ENCODE measurements at regions of chr3 and their contacts with region 1.

Region 1: DNA sequence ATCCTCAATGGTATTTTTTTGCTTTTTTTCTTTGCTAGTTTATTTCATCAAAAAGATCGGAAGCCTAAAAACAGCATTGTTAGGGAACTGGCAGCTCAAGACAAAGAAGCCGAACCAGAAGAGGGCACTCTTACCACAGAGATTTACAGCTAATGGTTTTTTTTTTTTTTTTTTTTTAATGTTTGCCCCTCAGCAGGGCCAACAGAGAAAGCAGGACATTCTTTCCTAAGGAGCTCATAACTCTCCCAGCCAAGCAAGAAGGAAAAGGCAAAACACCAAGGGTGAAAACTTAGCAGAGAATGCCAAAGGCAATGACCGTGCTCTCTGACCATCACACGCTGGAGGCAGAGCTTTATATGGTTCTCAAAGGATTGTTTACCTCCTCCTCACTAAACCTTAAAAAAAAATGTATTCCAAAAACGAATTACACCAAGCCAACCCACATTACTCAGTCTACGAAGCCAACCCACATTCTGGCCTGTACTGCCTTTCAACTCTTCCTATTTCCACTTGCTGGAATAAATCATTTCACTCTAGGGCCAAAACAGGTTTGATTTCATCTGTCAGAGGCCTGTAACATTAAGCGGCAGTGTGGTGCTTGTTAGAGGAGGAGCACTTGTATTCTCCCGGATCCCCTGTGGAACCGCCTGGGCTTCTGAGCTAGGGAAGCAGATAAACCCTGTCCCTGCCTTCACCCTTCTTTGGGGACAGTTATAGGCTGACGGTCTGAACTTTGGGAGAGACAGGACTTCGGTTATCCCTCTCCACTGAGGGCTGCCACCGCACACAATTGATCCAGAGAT is 35.6 kb upstream of the GYG1 start:
- DNase-seq: no peak
- ATAC-seq: peak; percentile 66
- H3K4me3 ChIP-seq: no peak overlapping the region
- H3K27ac ChIP-seq: no peak overlapping the region
- H3K4me1 ChIP-seq: no peaks in the 10 kb centered on the region
- H3K27me3 ChIP-seq: no peaks in the 10 kb centered on the region; a peak in 1 of 4 replicates
- CTCF ChIP-seq: peak; percentile 53 to 59 (median 57)
- EP300 ChIP-seq: no peak
- POLR2A ChIP-seq: no peak
- RAD21 ChIP-seq: peak; percentile 80

Region 2: DNA sequence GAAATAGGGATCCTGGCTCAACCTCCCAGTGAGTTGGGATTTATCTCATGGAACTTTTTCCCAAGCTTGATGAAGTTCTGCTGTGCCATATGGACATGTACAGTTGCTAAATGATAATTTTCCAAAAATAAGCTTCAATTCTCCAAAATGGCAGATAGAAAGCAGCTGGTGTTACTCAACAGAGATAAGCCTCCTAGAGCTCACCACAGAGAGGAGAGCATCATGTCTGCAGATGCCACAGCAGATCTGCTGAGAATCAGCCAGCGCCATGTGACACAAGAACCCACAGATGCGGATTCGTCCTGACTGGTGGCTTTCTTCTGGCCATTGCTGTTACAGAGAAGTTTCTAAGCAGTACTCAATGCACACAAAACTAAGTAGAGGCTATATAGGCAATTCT is 207.5 kb before region 1 on chr3:
- CTCF ChIA-PET with region 1: no interaction called
- POLR2A ChIA-PET with region 1: no interaction called
- RAD21 ChIA-PET with region 1: no interaction called
- SMC1A ChIA-PET with region 1: no interaction called
- in situ Hi-C with region 1: no loop called
- intact Hi-C with region 1: no loop called
- DNase-seq: no peak
- ATAC-seq: no peak
- H3K4me3 ChIP-seq: no peak overlapping the region
- H3K27ac ChIP-seq: no peak overlapping the region
- H3K4me1 ChIP-seq: no peaks in the 10 kb centered on the region
- H3K27me3 ChIP-seq: no peaks in the 10 kb centered on the region
- CTCF ChIP-seq: no peak
- EP300 ChIP-seq: no peak
- POLR2A ChIP-seq: no peak
- RAD21 ChIP-seq: no peak

Region 3: GRCh38 chr3:148861277-148861869 is 94.4 kb before region 1 on chr3:
- CTCF ChIA-PET with region 1: interaction called, 179 read pairs
- POLR2A ChIA-PET with region 1: no interaction called
- RAD21 ChIA-PET with region 1: no interaction called
- SMC1A ChIA-PET with region 1: interaction called, 7 read pairs
- in situ Hi-C with region 1: no loop called
- intact Hi-C with region 1: no loop called
- DNase-seq: no peak
- ATAC-seq: peak; percentile 80
- H3K4me3 ChIP-seq: no peak overlapping the region
- H3K27ac ChIP-seq: no peak overlapping the region
- H3K4me1 ChIP-seq: no peaks in the 10 kb centered on the region
- H3K27me3 ChIP-seq: peaks cover 0 to 8% of the 10 kb centered on the region in 2 experiments; a peak in 1 of 4 replicates
- CTCF ChIP-seq: peak; percentile 45 to 65 (median 46); a peak in 5 of 6 replicates
- EP300 ChIP-seq: no peak
- POLR2A ChIP-seq: no peak
- RAD21 ChIP-seq: peak; percentile 71

Region 4: DNA sequence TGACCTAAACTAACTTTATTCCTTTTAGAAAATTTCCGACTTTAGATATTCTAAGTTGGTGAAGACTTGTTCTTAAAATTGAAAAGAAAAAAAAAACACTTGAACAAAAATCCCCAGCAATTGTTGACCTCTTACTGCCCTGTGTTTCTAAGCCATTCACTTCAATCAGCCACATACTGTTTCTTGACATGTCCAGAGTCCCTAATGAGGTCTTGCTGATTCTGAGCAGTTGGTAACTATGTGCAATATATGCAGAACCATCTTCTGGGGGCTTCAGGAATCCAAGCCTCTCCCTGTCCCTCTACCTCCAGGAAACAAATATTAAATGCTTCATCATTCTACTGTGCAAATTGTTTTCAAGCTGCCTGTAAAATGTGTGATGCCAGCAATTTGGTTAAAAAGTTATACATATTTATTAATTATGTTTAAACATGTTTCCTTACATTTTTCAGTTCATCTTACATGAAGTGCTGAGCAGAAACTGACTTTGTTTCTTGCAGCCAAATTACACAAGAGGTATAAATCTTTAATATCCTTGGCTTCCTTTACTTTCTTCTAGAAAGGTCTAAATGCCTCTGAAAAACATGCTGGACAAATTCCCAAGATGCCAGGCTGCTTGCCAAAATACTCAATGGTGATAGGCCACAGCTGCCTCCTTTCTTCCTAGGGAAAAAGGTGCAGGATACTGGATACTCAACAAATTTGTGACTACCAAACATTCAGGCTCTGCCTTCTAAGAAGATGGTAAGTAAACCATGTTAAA is 15.8 kb after region 1 on chr3:
- CTCF ChIA-PET with region 1: interaction called, 13 read pairs
- POLR2A ChIA-PET with region 1: no interaction called
- RAD21 ChIA-PET with region 1: interaction called, 3 read pairs
- SMC1A ChIA-PET with region 1: interaction called, 10 read pairs
- in situ Hi-C with region 1: no loop called
- intact Hi-C with region 1: no loop called
- DNase-seq: no peak
- ATAC-seq: no peak
- H3K4me3 ChIP-seq: no peak overlapping the region
- H3K27ac ChIP-seq: no peak overlapping the region
- H3K4me1 ChIP-seq: no peaks in the 10 kb centered on the region
- H3K27me3 ChIP-seq: no peaks in the 10 kb centered on the region
- CTCF ChIP-seq: no peak
- EP300 ChIP-seq: no peak
- POLR2A ChIP-seq: no peak
- RAD21 ChIP-seq: no peak

Region 5: DNA sequence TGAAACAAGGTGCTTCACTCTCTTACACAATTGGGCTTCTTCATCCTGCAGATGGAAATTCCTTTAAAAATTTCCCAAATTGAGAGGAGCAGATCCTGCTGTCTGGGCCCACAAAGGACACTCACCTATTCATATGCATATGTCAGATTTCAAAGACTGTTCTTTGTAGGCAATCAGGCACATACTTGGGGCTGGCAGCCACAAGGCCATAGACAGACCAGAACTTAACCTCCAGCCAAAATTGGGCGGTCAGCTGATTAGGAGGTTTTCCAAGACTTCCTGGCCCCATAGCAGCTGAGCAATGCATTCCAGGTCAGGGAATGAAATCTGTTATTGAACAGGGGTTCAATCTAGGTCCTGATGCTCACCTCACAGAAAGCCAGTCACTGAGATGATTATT is 158.7 kb after region 1 on chr3:
- CTCF ChIA-PET with region 1: interaction called, 81 read pairs
- POLR2A ChIA-PET with region 1: no interaction called
- RAD21 ChIA-PET with region 1: interaction called, 29 read pairs
- SMC1A ChIA-PET with region 1: interaction called, 38 read pairs
- in situ Hi-C with region 1: no loop called
- intact Hi-C with region 1: no loop called
- DNase-seq: no peak
- ATAC-seq: no peak
- H3K4me3 ChIP-seq: no peak overlapping the region
- H3K27ac ChIP-seq: no peak overlapping the region
- H3K4me1 ChIP-seq: no peaks in the 10 kb centered on the region
- H3K27me3 ChIP-seq: no peaks in the 10 kb centered on the region
- CTCF ChIP-seq: no peak
- EP300 ChIP-seq: no peak
- POLR2A ChIP-seq: no peak
- RAD21 ChIP-seq: no peak

Region 6: GRCh38 chr3:149163066-149163465 is 207.3 kb after region 1 on chr3:
- CTCF ChIA-PET with region 1: no interaction called
- POLR2A ChIA-PET with region 1: no interaction called
- RAD21 ChIA-PET with region 1: no interaction called
- SMC1A ChIA-PET with region 1: no interaction called
- in situ Hi-C with region 1: no loop called
- intact Hi-C with region 1: no loop called
- DNase-seq: no peak
- ATAC-seq: no peak
- H3K4me3 ChIP-seq: no peak overlapping the region
- H3K27ac ChIP-seq: no peak overlapping the region
- H3K4me1 ChIP-seq: no peaks in the 10 kb centered on the region
- H3K27me3 ChIP-seq: no peaks in the 10 kb centered on the region
- CTCF ChIP-seq: no peak
- EP300 ChIP-seq: no peak
- POLR2A ChIP-seq: no peak
- RAD21 ChIP-seq: no peak

Region 7: DNA sequence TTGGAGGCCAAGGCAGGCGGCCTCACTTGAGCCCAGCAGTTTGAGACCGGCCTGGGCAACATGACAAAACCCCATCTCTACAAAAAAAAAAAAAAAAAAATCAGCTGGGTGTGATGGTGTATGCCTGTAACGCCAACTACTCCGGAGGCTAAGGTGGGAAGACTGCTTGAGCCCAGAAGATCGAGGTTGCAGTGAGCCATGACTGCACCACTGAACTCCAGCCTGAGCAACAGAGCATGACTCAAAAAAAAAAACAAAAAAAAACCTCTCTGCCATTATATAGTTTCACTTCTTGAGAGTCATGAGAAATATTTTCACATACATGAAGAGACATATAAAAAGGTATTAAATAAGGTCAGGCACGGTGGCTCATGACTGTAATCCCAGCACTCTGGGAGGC is 311.8 kb after region 1 on chr3:
- CTCF ChIA-PET with region 1: interaction called, 75 read pairs
- POLR2A ChIA-PET with region 1: no interaction called
- RAD21 ChIA-PET with region 1: interaction called, 38 read pairs
- SMC1A ChIA-PET with region 1: interaction called, 6 read pairs
- in situ Hi-C with region 1: loop called (anchors 5 kb)
- intact Hi-C with region 1: no loop called
- DNase-seq: no peak
- ATAC-seq: peak; percentile 78
- H3K4me3 ChIP-seq: no peak overlapping the region
- H3K27ac ChIP-seq: no peak overlapping the region
- H3K4me1 ChIP-seq: 0 out of 2 replicates have a peak, but pooled peaks cover 2% of the 10 kb centered on the region
- H3K27me3 ChIP-seq: no peaks in the 10 kb centered on the region
- CTCF ChIP-seq: no peak
- EP300 ChIP-seq: no peak
- POLR2A ChIP-seq: no peak
- RAD21 ChIP-seq: no peak

Region 8: DNA sequence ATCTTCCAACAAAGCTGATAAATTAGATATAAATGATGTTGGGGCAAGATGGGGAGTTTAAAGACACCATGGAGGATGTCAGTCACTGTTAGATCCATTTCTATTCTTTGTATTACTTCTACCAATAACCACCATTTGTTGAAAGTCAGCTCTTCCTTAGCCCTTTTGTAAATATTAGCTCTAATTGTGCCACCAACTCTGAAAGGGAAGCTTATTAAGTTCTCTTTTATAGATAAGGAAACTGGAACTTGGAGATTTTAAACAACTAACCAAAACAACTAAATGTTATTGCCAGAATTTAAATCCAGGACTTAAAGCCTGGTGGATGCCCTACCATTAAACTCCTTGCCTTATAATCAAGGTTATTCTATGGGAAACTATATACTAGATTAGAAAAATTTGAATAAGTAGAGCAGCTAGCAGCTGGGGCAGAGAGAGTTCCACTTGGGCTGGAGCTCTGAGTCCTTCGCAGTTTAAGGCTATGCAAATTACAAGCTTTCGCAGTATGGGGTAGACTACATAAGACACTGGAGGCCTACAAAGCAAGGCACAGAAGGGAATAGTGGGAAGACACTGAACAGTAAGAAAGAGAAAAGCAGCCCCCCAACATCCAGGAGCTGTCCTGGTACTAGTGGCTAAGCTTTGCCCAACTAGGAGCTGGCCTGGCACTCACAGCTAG is 325.1 kb after region 1 on chr3:
- CTCF ChIA-PET with region 1: interaction called, 75 read pairs
- POLR2A ChIA-PET with region 1: no interaction called
- RAD21 ChIA-PET with region 1: interaction called, 38 read pairs
- SMC1A ChIA-PET with region 1: interaction called, 18 read pairs
- in situ Hi-C with region 1: no loop called
- intact Hi-C with region 1: no loop called
- DNase-seq: no peak
- ATAC-seq: no peak
- H3K4me3 ChIP-seq: no peak overlapping the region
- H3K27ac ChIP-seq: no peak overlapping the region
- H3K4me1 ChIP-seq: peaks cover 4% of the 10 kb centered on the region; the same call in 1 of the 2 replicates
- H3K27me3 ChIP-seq: no peaks in the 10 kb centered on the region
- CTCF ChIP-seq: no peak
- EP300 ChIP-seq: no peak
- POLR2A ChIP-seq: no peak
- RAD21 ChIP-seq: no peak

Region 9: DNA sequence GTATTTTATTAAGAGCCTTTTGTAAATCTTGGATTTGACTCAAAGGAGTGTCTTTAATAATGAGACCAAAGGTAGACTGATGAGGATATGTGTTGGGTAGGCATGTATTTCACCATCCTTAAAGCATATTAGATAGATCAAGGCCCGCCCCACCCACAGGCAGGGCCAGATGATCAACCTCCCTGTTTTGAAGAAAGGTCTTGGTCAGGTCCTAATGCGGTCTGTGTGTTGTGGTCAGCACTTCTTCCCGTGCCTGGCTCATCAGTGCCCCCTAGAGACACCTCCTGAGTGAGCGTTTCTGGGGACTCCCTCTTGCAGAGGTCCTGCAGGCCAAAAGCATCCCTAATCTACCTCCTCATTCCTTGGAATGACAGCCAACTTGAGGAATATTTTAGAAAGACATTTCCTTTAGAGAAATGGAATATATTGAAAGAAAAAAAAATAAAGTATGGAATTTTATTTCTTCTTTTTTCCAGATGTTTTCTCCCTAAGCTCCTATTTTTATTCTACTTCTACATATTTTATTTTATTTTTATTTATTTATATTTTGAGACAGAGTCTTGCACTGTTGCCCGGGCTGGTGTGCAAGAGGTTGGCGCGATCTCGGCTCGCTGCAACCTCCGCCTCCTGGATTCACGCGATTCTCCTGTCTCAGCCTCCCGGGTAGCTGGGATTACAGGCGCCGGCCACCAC is 524.7 kb after region 1 on chr3:
- CTCF ChIA-PET with region 1: interaction called, 4 read pairs
- POLR2A ChIA-PET with region 1: no interaction called
- RAD21 ChIA-PET with region 1: no interaction called
- SMC1A ChIA-PET with region 1: no interaction called
- in situ Hi-C with region 1: no loop called
- intact Hi-C with region 1: loop called (anchors 5 kb)
- DNase-seq: peak; percentile 52
- ATAC-seq: peak; percentile 99
- H3K4me3 ChIP-seq: no peak overlapping the region
- H3K27ac ChIP-seq: no peak overlapping the region
- H3K4me1 ChIP-seq: no peaks in the 10 kb centered on the region
- H3K27me3 ChIP-seq: no peaks in the 10 kb centered on the region
- CTCF ChIP-seq: peak; percentile 86 to 95 (median 93)
- EP300 ChIP-seq: no peak
- POLR2A ChIP-seq: no peak
- RAD21 ChIP-seq: peak; percentile 97

Measured in GM12878 (cell line).